Head of caudate nucleus (tissue), 42 donors: ENCODE measurements at regions of chr14 and their contacts with region 1.

Region 1: DNA sequence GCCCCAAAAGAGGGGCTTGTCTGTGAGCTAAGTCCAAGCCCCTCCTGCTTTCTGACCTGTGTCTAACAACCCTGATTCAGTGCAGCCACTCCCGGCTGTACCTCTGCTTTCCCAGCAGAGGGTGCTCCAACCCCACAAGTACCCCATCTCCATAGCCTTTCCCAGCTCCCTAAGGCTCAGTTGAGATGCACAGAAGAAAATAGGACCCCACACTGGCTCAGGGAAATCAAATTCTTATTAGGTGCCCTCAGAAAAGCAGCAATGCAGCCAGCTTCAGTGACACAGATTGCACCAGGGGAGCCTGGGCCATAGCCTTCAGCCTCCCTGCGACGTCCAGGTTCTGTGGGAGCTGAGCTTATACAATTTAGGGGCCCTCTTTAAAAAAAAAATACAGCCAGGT is 49.9 kb downstream of the LRRC74A start:
- DNase-seq: peak; percentile 50 to 88 (median 74)

Region 2: GRCh38 chr14:76720382-76720813 is 155.7 kb before region 1 on chr14:
- intact Hi-C with region 1: no loop called
- DNase-seq: peak in 25 of 42 donors; percentile 11 to 60 (median 35)

Region 3: GRCh38 chr14:76910371-76910890 is 34.4 kb after region 1 on chr14:
- intact Hi-C with region 1: loop called (anchors 5 kb)
- DNase-seq: no peak

Region 4: DNA sequence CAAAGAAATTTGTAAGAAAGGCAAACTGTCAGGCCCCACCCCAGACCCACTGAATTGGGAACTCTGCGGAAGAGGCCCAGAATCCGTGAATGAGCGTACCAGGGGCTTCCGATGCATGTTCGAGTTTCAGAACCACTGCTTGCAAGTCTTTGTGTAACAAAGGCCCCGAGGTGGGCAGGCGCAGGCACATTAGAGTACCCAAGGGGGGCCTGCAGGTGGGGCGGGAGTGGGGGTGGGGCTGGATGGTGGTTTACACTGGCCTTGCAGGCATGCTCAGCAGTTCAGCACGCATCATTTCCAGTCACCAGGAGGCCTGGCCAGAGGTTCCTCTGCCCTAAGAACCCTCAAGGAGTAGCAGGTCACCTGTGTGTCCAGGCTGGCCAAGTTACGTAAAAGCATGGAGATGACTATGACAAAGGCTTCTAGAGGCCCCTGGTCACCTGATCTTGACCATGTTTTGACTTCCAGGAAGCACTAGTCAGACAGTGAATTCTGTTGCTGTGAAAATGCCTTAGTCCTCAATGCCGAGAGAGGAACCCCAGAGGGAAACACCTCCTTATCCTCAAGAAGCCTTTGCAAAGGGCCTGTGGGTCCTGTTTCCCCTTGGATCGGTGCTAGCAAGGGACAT is 185.7 kb after region 1 on chr14:
- intact Hi-C with region 1: no loop called
- DNase-seq: no peak

Region 5: DNA sequence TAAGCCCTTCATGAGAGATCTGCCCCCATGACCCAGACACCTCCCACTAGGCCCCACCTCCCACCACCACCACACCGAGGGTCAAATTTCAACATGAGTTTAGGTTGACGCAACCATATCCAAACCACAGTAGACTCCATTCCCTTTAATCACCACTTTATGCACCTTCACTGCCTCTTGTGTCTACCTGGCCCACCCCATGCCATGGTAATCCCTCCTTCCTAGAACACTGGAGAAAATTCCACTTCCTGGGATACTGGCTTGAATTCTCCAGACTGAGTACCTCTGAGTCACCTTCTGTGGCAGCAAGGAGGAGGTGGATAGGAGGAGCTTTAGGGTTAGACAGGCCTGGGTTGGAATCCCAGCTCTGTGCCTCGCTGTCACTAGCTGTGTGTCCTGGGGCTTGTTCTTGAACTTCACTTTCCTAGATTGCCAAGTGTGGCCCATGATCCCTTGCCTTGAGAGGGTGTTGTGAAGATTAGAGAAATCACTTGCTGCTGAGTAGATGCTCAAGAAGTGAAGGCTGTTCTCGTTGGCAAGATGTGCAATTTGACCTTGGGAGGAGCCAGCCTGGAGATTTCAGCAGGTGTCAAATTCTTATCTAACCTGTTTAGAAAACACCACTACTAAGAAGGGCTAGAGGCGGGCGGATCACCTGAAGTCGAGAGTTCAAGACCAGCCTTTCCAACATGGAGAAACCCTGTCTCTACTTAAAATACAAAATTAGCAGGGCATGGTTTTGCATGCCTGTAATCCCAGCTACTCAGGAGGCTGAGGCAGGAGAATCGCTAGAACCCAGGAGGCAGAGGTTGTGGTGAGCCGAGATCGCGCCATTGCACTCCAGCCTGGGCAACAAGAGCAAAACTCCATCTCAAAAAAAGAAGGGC is 196.1 kb after region 1 on chr14:
- intact Hi-C with region 1: loop called (anchors 2 kb)
- DNase-seq: peak in 1 of 42 donors; percentile 6